ENCODE measurements at regions of chr11 and their contacts with region 1.

Region 1: GRCh38 chr11:129815596-129816461 is at the start of gene TMEM45B:
- DNase-seq: no peak
- H3K4me3 Mint-ChIP-seq: peak within 1 kb of the TSS; percentile 76
- H3K27ac Mint-ChIP-seq: peak within 1 kb of the TSS; percentile 88
- H3K4me1 Mint-ChIP-seq: peaks cover 37% of the 10 kb centered on the region
- H3K27me3 Mint-ChIP-seq: peaks cover 56% of the 10 kb centered on the region
- total RNA-seq, gene TMEM45B: 3.1 to 3.3 TPM

Region 2: DNA sequence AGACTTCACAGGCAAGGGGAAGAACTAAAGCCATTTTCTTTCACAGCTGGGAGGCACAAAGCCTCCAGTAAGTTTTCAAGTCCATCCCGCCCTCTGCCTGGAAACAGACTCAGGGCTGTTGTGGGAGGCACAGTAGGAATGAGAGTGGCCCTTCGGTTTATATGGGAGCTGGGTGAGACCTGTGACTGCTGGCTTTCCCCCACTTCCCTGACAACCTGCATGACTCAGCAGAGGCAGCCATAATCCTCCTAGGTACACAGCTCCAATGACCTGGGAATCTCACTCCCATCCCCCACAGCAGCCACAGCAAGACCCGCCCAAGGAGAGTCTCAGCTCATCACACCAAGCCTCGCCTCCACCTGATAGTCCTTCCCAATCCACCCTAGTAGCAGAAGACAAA is 12.3 kb before region 1 on chr11:
- CTCF ChIA-PET with region 1: no interaction called
- POLR2A ChIA-PET with region 1: interaction called, 10 read pairs
- DNase-seq: no peak
- H3K4me3 Mint-ChIP-seq: no peak overlapping the region
- H3K27ac Mint-ChIP-seq: peak overlapping the region; percentile 70
- H3K4me1 Mint-ChIP-seq: peaks cover 26% of the 10 kb centered on the region
- H3K27me3 Mint-ChIP-seq: peaks cover 35% of the 10 kb centered on the region

Region 3: DNA sequence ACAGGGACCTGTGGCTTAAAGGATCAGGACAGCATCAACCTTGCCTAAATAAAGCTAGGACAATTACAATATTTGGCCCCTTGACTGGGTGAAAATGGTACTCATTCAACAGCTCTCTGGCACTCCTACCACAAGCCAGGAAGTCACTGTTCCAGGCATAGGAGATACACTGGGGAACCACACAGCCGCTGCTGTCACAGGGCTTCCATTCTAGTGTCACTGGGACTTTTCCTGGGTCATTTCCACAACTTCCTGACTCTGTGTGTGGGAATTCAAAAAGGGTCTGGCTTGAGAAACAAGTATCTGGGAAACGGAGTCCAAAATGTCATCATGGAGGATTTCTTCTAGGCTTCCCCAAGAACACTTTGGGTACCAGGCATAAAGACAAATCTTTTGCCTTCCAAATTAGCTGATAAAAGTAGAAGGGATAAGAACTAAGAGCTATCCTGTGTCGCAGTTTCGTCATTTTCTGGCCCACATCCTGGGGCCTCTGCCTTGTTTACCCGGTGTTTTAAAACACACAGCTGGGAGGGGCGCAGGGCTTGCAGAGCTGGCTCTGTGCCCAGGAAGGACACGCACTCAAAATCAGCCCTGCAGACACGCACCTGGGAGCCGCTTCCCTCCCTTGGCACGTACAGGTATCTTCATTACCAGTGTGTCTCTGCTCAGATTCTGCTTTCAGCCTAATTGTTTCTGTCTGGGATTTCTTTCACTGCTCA is 37.8 kb after region 1 on chr11:
- CTCF ChIA-PET with region 1: no interaction called
- POLR2A ChIA-PET with region 1: interaction called, 17 read pairs
- DNase-seq: peak; percentile 85
- H3K4me3 Mint-ChIP-seq: peak overlapping the region; percentile 61
- H3K27ac Mint-ChIP-seq: peak overlapping the region; percentile 99
- H3K4me1 Mint-ChIP-seq: peaks cover 34% of the 10 kb centered on the region
- H3K27me3 Mint-ChIP-seq: no peaks in the 10 kb centered on the region

Region 4: GRCh38 chr11:129895126-129896041 is 79.6 kb after region 1 on chr11 and contains the start of gene NFRKB:
- CTCF ChIA-PET with region 1: no interaction called
- POLR2A ChIA-PET with region 1: interaction called, 10 read pairs
- DNase-seq: peak; percentile 89
- H3K4me3 Mint-ChIP-seq: peak within 1 kb of the TSS; percentile 90
- H3K27ac Mint-ChIP-seq: peak within 1 kb of the TSS; percentile 77
- H3K4me1 Mint-ChIP-seq: peaks cover 34% of the 10 kb centered on the region
- H3K27me3 Mint-ChIP-seq: peaks cover 3% of the 10 kb centered on the region
- total RNA-seq, gene NFRKB: 39.2 to 44.9 TPM

Measured in activated CD4-positive, alpha-beta memory T cell treated with anti-CD3 and anti-CD28 coated beads, Interleukin-2, amount 10 ng/mL, durations not matched to agents 7 days and 5 days (primary cell).